ENCODE measurements at regions of chr1 and their contacts with region 1.

Region 1: DNA sequence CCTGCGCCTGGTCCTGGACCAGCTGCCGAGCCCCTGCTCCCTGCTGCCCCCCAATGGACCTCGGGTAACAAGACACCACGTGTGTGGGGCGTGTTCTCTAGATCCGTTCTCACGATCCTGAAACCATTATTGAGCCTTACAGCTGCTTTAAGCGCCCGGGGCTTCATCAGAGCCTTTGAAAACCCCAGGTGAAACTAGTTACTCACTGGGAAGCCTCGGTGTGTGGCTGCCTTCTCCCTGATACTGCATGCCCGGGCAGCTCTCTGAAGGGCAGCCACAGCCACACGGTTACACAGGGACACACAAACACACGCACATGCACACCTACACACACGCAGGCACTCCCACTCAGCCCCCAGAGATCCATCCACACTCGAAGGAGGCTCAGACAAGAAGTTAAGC is 5.3 kb downstream of the HES2 start:
- DNase-seq: peak; percentile 97
- H3K4me3 Mint-ChIP-seq: peak overlapping the region; percentile 65
- H3K27ac Mint-ChIP-seq: peak overlapping the region; percentile 99
- H3K4me1 Mint-ChIP-seq: peaks cover 32% of the 10 kb centered on the region
- H3K27me3 Mint-ChIP-seq: no peaks in the 10 kb centered on the region
- CTCF ChIP-seq: peak; percentile 54

Region 2: GRCh38 chr1:6367381-6368012 is 46.9 kb before region 1 on chr1:
- CTCF ChIA-PET with region 1: interaction called, 26 read pairs
- POLR2A ChIA-PET with region 1: interaction called, 29 read pairs
- intact Hi-C with region 1: no loop called
- DNase-seq: peak; percentile 69
- H3K4me3 Mint-ChIP-seq: no peak overlapping the region
- H3K27ac Mint-ChIP-seq: peak overlapping the region; percentile 64
- H3K4me1 Mint-ChIP-seq: peaks cover 17% of the 10 kb centered on the region
- H3K27me3 Mint-ChIP-seq: no peaks in the 10 kb centered on the region
- CTCF ChIP-seq: no peak

Region 3: DNA sequence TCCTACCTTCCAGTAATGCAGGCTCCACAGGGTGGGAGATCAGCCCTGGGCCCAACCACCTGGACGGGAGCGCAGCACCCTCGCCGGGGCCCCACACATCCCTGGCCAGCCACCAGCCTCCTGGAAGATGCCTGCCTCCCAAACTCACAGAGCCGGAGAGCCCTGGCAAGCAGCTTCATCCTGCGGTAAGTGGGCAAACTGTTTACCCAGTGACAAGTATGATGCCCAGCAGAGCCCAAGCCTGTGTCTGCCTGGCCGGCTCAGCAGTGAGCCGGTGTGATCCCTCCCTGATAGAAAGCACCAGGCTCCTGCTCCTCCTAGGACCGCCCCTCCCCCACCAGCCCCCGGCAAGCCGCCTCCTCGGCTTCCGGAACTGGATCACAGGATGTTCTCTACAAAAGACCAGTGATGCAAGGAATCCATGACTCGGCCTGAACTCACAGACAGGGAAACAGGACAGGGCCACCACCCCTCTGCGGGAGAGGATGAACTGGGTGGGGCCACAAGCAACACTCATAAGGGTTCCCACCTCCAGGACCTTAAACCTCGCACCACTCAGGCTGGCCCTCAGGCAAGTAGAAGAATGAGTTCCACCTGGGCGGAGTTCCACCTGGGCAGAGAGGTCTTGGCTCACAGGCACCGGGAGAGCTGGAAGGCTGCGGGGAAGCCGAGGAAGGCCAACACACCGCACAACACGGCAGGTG is 28.8 kb before region 1 on chr1:
- CTCF ChIA-PET with region 1: interaction called, 3 read pairs
- POLR2A ChIA-PET with region 1: interaction called, 28 read pairs
- intact Hi-C with region 1: no loop called
- DNase-seq: peak; percentile 97
- H3K4me3 Mint-ChIP-seq: peak overlapping the region; percentile 89
- H3K27ac Mint-ChIP-seq: peak overlapping the region; percentile 81
- H3K4me1 Mint-ChIP-seq: peaks cover 25% of the 10 kb centered on the region
- H3K27me3 Mint-ChIP-seq: no peaks in the 10 kb centered on the region
- CTCF ChIP-seq: no peak

Region 4: GRCh38 chr1:6393400-6394187 is 20.9 kb before region 1 on chr1 and contains the start of gene ACOT7:
- CTCF ChIA-PET with region 1: interaction called, 7 read pairs
- POLR2A ChIA-PET with region 1: interaction called, 27 read pairs
- intact Hi-C with region 1: no loop called
- DNase-seq: peak; percentile 87
- H3K4me3 Mint-ChIP-seq: peak within 1 kb of the TSS; percentile 75
- H3K27ac Mint-ChIP-seq: peak within 1 kb of the TSS; percentile 91
- H3K4me1 Mint-ChIP-seq: no peaks in the 10 kb centered on the region
- H3K27me3 Mint-ChIP-seq: no peaks in the 10 kb centered on the region
- CTCF ChIP-seq: peak; percentile 16
- total RNA-seq, gene ACOT7: 110 and 117 TPM in 2 replicates

Region 5: GRCh38 chr1:6401673-6402072 is 12.8 kb before region 1 on chr1:
- CTCF ChIA-PET with region 1: interaction called, 21 read pairs
- POLR2A ChIA-PET with region 1: interaction called, 9 read pairs
- intact Hi-C with region 1: no loop called
- DNase-seq: no peak
- H3K4me3 Mint-ChIP-seq: no peak overlapping the region
- H3K27ac Mint-ChIP-seq: no peak overlapping the region
- H3K4me1 Mint-ChIP-seq: no peaks in the 10 kb centered on the region
- H3K27me3 Mint-ChIP-seq: no peaks in the 10 kb centered on the region
- CTCF ChIP-seq: no peak

Region 6: GRCh38 chr1:6438047-6438525 is 23.6 kb after region 1 on chr1:
- CTCF ChIA-PET with region 1: interaction called, 118 read pairs
- POLR2A ChIA-PET with region 1: interaction called, 21 read pairs
- intact Hi-C with region 1: no loop called
- DNase-seq: peak; percentile 77
- H3K4me3 Mint-ChIP-seq: no peak overlapping the region
- H3K27ac Mint-ChIP-seq: no peak overlapping the region
- H3K4me1 Mint-ChIP-seq: peaks cover 13% of the 10 kb centered on the region
- H3K27me3 Mint-ChIP-seq: no peaks in the 10 kb centered on the region
- CTCF ChIP-seq: peak; percentile 89